ENCODE measurements at regions of chr14 and their contacts with region 1.

Region 1: GRCh38 chr14:90399541-90400444 is 3.0 kb downstream of the CALM1 start:
- H3K4me3 Mint-ChIP-seq: peak overlapping the region; percentile 96
- H3K27ac Mint-ChIP-seq: peak overlapping the region; percentile 80
- H3K4me1 Mint-ChIP-seq: peaks cover 48% of the 10 kb centered on the region
- H3K27me3 Mint-ChIP-seq: peaks cover 1% of the 10 kb centered on the region

Region 2: DNA sequence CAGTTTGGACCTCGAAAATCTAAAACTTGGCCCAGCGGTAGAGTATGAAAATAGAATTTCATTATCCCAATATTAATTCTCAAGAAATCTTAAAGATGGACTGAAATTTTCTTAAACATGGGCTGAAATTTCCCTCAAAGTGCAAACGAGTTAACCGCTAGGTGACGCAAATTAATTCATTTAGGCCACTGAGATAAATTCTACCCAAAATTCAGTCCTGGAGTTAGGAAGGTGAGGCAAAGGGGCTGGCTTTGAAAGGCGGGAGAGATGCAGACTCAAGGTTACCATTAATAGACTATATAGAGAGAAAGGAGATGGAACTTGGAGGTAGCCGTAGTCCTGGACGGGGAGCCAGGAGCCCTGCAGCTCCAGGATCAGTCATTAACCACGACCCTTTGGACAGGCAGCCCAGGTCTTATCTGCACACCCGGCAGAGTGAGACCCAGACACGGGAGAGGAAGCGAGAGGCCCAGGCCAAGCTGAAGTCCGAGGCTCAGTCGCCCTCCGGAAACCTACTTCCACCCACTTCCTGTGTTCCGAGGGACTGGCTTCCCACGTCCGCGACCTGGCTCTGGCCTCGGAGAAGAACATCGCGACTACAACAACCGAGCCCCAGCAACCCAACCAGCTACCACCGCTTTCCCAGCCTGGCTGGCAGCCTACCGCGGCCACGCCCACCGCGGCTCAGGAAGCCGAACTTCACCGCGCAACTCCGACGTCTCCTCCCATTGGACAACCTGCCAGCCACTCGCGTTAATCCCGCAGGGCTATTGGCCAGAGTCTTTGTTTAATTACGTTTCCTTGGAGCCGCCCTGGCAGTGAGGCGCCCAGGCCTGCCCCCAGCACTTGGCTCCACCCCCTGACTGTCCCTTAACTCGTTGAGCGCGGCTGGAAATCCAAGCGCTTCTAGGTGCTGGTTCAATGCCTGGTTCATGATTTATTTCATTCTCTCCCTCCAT is 445.4 kb before region 1 on chr14 and contains the start of gene EFCAB11:
- intact Hi-C with region 1: loop called (anchors 5 kb)
- H3K4me3 Mint-ChIP-seq: peak within 1 kb of the TSS; percentile 97
- H3K27ac Mint-ChIP-seq: peak within 1 kb of the TSS; percentile 81
- H3K4me1 Mint-ChIP-seq: peaks cover 33% of the 10 kb centered on the region
- H3K27me3 Mint-ChIP-seq: no peaks in the 10 kb centered on the region

Region 3: DNA sequence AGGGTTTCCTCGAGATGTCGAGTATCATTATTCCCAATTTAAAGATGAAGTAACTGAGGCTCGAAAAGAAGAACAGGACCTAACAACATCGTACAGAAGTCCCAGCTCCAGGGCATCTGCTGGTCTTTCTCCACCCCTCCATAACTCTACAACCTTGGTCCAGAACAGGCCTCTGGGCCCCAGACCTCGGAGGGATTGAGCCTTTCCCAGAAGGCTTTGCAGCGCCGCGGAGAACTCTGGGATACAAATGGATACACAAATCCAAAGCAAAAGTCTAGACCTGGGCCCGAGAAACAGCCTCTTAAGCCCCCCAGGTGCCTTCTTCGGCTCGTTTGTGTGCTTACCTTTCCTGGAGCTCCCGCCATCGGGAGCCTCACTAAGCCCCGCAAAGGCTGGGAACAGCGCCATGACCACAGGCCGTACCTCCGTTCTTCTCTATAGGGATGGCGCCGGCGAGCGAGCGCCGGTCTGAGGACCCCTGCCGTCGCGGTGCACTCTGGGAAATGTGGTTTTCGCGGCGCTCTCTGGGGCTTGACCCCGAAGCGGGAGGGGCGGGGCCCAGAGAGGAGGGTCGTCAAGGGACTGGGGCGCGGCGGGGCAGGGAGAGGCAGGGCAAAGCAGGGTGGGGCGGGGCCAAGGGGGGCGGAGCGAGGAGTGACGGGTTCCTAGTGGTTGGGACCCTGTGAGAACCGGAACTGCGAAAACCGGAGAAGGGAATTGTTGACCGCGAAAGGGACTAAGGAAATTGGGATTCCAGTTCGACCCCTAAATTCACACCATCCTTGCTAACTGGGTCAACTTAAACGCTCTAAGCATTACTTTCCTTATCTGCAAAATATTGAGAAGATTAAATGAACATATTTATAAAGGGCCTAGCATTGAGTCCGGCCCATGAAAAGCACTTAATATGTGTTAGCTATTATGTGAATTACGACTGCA is 68.0 kb before region 1 on chr14 and contains the start of gene NRDE2:
- intact Hi-C with region 1: loop called (anchors 5 kb)
- H3K4me3 Mint-ChIP-seq: peak within 1 kb of the TSS; percentile 81
- H3K27ac Mint-ChIP-seq: peak within 1 kb of the TSS; percentile 95
- H3K4me1 Mint-ChIP-seq: peaks cover 13% of the 10 kb centered on the region
- H3K27me3 Mint-ChIP-seq: peaks cover 23% of the 10 kb centered on the region

Region 4: GRCh38 chr14:90383075-90383730 is 16.6 kb before region 1 on chr14:
- intact Hi-C with region 1: loop called (anchors 1 kb)
- H3K4me3 Mint-ChIP-seq: no peak overlapping the region
- H3K27ac Mint-ChIP-seq: no peak overlapping the region
- H3K4me1 Mint-ChIP-seq: peaks cover 9% of the 10 kb centered on the region
- H3K27me3 Mint-ChIP-seq: no peaks in the 10 kb centered on the region

Region 5: DNA sequence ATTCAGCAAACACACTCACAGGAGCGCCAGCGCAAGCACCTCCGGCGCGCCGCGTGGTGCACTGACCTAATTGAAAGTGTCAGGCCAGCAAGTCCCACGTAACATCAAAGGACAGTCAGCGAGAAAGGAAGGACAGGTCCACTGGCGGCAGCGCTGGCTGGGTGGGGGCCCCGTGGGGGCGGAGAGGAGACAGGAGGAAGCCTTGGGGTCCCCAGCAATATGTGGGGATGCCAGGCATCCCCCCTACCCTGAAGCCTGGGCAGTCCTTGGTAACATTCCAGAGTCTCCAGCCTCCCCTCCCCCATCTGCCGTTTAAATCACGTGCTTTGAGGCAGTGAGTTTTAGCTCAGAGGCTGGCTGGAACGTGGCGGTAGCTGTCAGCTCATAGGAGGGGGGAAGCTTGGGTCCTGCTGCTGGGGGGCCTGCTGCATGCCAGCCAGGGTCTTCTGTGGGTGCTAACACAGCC is 156.3 kb after region 1 on chr14:
- intact Hi-C with region 1: no loop called
- H3K4me3 Mint-ChIP-seq: no peak overlapping the region
- H3K27ac Mint-ChIP-seq: no peak overlapping the region
- H3K4me1 Mint-ChIP-seq: peaks cover 50% of the 10 kb centered on the region
- H3K27me3 Mint-ChIP-seq: peaks cover 6% of the 10 kb centered on the region

Region 6: DNA sequence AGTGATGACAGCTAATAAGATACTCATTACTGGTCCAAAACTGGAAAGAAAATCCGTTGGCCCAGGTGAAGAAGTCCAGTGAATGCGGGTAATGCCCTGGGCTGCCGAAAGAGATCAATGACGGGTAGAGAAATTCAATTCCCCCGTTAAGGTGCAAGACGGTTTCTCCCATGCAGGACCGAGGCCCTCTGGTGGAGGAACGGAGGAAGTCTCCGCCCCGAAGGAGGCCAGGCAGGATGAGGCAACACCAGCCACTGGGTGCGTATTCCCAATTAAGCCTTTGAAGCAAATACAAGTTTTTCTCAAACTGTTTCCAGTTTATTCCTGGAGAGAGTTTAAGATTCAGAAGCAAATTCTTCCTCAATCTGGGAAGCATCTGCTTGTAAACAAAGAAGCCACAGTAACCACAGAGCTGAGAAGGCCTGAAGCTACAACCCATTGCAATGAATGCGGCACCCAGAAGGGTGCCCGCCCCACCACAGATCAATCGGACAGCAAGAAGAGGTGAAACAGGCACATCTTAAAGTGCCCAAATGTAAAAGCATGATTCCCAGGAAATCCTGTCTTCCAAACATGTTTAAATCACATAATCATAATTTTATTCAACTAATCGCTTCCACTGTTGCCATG is 297.9 kb after region 1 on chr14:
- intact Hi-C with region 1: loop called (anchors 1 kb)
- H3K4me3 Mint-ChIP-seq: no peak overlapping the region
- H3K27ac Mint-ChIP-seq: no peak overlapping the region
- H3K4me1 Mint-ChIP-seq: peaks cover 25% of the 10 kb centered on the region
- H3K27me3 Mint-ChIP-seq: no peaks in the 10 kb centered on the region

Region 7: GRCh38 chr14:90758028-90758889 is 358.5 kb after region 1 on chr14:
- intact Hi-C with region 1: loop called (anchors 5 kb)
- H3K4me3 Mint-ChIP-seq: peak overlapping the region; percentile 74
- H3K27ac Mint-ChIP-seq: peak overlapping the region; percentile 84
- H3K4me1 Mint-ChIP-seq: peaks cover 44% of the 10 kb centered on the region
- H3K27me3 Mint-ChIP-seq: no peaks in the 10 kb centered on the region

Measured in dendritic cell treated with granulocyte-macrophage colony-stimulating factor and Interleukin-4, amounts not matched to agents 40 ng/mL and 50 ng/mL, for 4 days (primary cell).